Upper lobe of right lung (tissue), 1 donor: ENCODE measurements at regions of chr16 and their contacts with region 1.

Region 1: DNA sequence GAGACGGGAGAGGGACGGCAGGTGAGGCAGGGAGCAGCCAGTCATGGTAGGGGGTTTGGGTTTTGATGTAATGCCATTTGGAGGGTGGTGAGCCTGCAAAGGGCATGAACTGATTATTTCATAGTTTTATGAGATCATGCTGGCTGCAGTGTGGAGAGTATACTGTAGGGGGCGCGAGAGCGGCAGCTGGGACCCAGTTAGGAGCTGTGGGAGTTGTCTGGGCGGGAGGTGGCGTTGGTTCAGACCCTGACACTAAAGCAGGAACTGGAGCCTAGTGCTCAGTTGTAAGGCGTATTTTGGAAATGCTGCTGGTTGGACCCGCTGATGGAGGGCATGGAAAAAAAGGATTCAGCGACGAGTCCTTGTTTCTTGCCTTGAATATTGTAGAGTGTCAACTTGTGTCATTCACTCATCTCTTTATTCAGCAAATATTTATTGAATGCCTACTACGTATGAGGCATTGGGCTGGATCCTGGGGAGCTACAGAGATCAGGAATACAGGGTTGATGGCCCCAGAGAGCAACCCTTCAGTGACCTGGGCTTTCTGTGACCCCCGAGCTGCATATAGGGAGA is 23.7 kb upstream of the KDM8 start:
- DNase-seq: peak; percentile 88
- ATAC-seq: peak; percentile 98
- H3K4me3 ChIP-seq: no peak overlapping the region
- H3K27ac ChIP-seq: no peak overlapping the region
- H3K4me1 ChIP-seq: no peaks in the 10 kb centered on the region
- H3K27me3 ChIP-seq: peaks cover 3% of the 10 kb centered on the region
- CTCF ChIP-seq: peak; percentile 92

Region 2: DNA sequence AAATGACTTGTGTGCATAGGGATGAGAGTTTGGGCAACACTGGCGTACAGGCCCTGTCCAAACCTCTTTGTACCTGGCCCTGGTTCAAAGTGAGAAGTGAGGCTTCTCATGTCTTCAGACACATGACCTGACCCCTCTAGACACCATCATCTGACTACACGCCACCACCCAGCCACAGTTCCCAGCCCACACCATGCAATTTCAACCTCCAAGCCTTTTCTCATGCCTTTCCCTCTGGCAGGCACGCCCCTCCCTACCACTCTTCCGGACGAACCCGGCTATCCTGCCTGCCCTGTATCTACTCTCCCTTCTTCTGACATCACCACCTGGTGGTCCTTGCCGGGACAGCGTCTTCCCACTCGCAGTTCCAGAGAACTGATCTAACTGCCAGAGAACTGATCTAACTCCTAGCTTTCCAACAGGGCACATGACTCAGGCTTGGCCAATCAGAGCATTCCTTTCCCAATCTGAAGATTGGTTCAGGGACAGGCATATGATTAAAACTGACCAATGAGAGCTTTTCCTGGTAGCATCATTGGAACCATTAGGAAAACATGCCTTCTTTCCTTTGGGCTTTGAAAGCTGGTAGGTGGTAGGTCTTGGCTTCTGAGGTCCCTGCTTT is 195.3 kb after region 1 on chr16:
- intact Hi-C with region 1: loop called (anchors 5 kb)
- DNase-seq: peak; percentile 79
- ATAC-seq: peak; percentile 89
- H3K4me3 ChIP-seq: no peak overlapping the region
- H3K27ac ChIP-seq: peak overlapping the region; percentile 19
- H3K4me1 ChIP-seq: peaks cover 12% of the 10 kb centered on the region
- H3K27me3 ChIP-seq: no peaks in the 10 kb centered on the region
- CTCF ChIP-seq: peak; percentile 48